A673 (cell line): ENCODE measurements at regions of chr17 and their contacts with region 1.

Region 1: DNA sequence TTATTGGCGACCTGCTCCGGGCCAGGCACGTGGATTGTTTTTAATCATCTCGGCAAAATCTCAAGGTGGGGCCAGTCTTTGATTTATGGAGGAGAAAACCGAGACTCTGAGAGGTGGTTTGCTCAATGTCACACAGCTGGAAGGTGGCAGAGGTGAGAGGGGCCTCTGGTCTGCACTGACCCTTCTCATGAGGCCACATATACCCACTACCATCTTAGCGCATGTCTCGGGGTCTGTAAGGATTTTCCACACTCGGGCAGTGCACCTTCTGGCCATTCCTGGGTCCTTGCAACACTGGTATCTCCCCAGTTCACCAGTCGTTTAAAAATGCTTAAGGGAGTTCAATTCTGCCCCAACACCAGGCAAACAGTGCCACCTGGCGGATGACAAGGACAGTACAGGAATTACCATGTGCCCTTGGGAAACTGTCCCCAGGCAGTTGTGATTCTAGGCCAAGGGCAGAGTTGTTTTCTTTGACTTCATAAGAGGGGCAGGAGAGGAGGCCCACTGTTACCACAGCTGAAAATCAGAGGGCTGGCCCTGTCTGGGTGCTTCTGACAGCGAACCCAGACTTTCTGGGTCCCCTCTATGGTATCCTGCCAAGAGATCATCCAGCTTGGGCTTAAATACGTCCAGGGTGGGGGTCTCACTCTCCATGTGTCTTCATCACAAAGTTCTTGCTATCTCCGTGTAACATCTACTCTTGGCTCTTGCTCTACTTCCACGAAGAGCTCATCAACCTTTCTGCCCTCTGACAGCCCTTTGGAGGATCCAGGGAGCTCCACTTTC is 39.4 kb upstream of the RAI1 start:
- DNase-seq: peak; percentile 87
- H3K4me3 ChIP-seq: no peak overlapping the region
- H3K27ac ChIP-seq: no peak overlapping the region
- H3K4me1 ChIP-seq: no peaks in the 10 kb centered on the region
- H3K27me3 ChIP-seq: no peaks in the 10 kb centered on the region
- CTCF ChIP-seq: peak; percentile 91

Region 2: DNA sequence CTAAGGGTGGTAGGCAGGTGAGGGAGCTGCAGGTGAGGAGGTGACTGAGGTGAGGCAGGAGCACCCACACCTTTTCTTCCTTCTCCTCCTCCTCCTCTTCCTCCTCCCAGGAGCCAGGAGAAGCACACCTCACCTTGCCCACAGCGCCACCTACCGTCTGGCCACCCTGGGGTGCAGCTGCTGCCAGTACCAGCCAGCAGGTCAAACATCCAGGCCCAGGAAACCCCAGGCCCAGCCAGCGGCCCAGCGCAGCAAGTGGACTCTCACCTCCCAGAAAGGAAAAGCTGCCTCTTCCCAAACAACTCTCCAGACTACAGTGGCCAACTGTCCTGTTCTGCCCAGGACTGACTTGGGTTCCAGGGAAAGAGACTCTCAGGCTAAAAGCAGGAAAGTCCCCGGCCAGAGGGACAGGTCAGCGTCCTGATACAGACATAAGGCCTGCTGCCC is 73.0 kb before region 1 on chr17:
- CTCF ChIA-PET with region 1: no interaction called
- POLR2A ChIA-PET with region 1: no interaction called
- intact Hi-C with region 1: loop called (anchors 2 kb)
- DNase-seq: peak; percentile 46
- H3K4me3 ChIP-seq: no peak overlapping the region
- H3K27ac ChIP-seq: no peak overlapping the region
- H3K4me1 ChIP-seq: no peaks in the 10 kb centered on the region
- H3K27me3 ChIP-seq: no peaks in the 10 kb centered on the region
- CTCF ChIP-seq: peak; percentile 87

Region 3: DNA sequence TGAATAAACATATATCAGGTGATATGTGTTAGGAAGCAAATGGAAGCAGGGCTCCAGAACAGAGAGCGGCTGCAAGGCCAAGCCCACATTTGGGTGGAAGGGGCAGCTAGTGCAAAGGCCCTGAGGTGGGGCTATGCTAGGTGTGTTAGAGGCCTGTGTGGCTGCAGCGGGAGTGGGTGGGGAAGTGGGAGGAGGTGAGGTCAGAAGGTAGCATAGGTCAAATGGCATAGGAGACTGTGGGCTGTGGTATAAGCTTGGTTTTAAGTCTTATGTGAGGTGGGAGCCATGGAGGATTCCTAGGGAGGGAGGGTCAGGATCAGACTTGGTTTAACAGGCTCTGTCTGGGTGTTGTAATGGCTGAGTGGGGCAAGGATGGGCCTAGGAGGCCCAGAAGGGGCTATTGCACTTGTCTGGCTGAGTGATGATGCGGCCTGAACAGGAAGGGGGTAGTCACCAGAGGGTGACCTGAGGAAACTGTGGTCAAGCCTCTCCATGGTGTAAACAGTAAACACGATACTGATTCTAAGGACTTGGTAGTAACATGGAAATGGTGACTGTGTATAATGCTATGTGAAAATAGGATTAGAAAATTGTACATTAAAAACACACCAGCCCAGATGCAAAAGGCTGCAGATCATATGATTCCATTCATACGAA is 70.6 kb after region 1 on chr17:
- CTCF ChIA-PET with region 1: no interaction called
- POLR2A ChIA-PET with region 1: no interaction called
- intact Hi-C with region 1: no loop called
- DNase-seq: no peak
- H3K4me3 ChIP-seq: no peak overlapping the region
- H3K27ac ChIP-seq: no peak overlapping the region
- H3K4me1 ChIP-seq: peaks cover 40% of the 10 kb centered on the region
- H3K27me3 ChIP-seq: no peaks in the 10 kb centered on the region
- CTCF ChIP-seq: no peak